HEK293 (cell line): ENCODE measurements at regions of chr22 and their contacts with region 1.

Region 1: GRCh38 chr22:36757668-36758211 is 18.2 kb downstream of the IFT27 start:
- H3K4me3 ChIP-seq: no peak overlapping the region
- H3K27ac ChIP-seq: no peak overlapping the region
- H3K4me1 ChIP-seq: no peaks in the 10 kb centered on the region
- CTCF ChIP-seq: peak; percentile 78

Region 2: DNA sequence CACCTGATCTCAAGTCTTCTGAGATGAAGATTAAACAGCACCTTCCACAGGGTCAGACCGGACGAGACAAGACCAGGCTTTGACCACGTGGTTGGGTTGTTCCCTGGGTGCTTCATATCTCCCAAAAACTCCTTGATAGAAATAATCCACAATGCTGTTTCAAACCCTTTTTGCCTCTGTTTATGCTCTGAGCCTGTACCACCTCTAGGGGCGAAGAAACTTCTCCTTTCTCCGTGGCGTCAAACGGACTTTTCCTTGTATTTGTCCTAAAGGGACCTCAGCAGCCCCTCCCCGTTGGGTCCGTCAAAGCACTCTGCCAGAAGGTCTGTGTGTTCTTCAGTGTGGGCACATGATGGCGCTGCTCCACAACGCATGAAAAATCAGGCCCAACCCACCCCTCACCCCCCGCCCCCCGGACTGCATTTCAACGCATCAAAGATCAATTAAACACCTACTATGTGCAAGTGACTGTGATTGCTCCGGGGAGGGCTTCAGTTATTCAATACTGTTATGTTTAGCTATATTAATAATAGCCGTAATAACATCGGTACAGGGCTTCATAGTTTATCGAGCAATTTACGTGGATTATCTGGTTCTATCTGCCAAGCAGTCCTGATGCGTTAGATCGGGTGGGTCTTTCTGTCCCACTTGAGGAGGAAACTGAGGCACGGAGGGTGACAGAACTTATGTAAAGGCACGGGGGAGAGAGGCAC is 211.5 kb before region 1 on chr22:
- CTCF ChIA-PET with region 1: interaction called, 27 read pairs
- POLR2A ChIA-PET with region 1: no interaction called
- H3K4me3 ChIP-seq: no peak overlapping the region
- H3K27ac ChIP-seq: no peak overlapping the region
- H3K4me1 ChIP-seq: no peaks in the 10 kb centered on the region
- CTCF ChIP-seq: peak; percentile 57

Region 3: DNA sequence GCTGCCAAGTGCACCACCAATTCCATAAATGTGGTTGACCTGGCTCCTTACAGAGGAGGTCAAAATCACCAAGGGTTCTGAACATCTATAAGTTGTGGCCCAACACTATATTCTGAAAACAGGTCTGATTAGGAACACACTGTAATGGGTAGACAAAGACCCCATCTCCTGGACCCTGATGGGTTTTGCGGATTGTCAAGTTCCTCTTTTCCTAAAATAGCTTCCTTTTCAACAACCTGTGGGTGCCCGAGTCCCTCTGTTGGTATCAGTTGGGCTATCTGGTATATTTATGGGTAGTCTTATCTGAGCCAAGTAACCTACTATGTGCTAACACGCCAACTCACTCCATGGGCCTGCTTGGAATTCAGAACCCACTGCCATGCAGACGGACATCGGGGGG is 44.3 kb before region 1 on chr22:
- CTCF ChIA-PET with region 1: interaction called, 15 read pairs
- POLR2A ChIA-PET with region 1: no interaction called
- H3K4me3 ChIP-seq: no peak overlapping the region
- H3K27ac ChIP-seq: no peak overlapping the region
- H3K4me1 ChIP-seq: no peaks in the 10 kb centered on the region
- CTCF ChIP-seq: no peak

Region 4: DNA sequence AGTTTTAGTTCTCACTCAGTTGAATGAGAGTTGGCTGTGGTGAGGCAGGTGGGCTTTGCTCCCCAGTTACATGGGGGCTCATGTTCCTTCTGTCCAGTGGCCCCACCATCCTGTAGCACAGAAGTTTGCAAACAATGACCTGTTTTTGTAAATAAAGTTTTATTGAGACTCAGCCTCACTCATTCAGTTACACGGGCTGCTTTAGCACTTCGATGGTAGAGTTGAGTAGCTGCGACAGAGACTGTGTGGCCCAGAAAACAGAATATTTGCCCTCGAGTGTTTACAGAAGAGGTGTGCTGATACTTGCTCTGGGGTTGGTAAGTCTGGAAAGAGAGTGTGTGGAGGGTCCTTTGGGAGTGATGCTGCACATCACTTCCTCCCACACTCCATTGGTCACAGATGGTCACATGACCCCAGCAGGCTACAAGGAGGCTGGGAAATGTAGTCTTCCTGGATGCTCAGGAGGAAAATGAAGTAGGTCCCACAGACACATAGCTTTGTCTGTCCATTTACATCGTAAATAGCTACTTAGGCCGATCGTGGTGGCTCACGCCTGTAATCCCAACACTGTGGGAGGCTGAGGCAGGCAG is 16.4 kb before region 1 on chr22:
- CTCF ChIA-PET with region 1: interaction called, 64 read pairs
- POLR2A ChIA-PET with region 1: interaction called, 5 read pairs
- H3K4me3 ChIP-seq: no peak overlapping the region
- H3K27ac ChIP-seq: no peak overlapping the region
- H3K4me1 ChIP-seq: no peaks in the 10 kb centered on the region
- CTCF ChIP-seq: no peak

Region 5: GRCh38 chr22:36775964-36776669 is 18.4 kb after region 1 on chr22 and contains the start of gene IFT27:
- CTCF ChIA-PET with region 1: interaction called, 55 read pairs
- POLR2A ChIA-PET with region 1: interaction called, 3 read pairs
- H3K4me3 ChIP-seq: peak within 1 kb of the TSS; percentile 90
- H3K27ac ChIP-seq: no peak within 1 kb of the TSS; the same call in 1 of the 2 replicates
- H3K4me1 ChIP-seq: peaks cover 4% of the 10 kb centered on the region
- CTCF ChIP-seq: no peak